ENCODE measurements at regions of chr6 and their contacts with region 1.

Region 1: GRCh38 chr6:5053038-5053437 is 32.1 kb upstream of the PPP1R3G start:
- DNase-seq: no peak
- H3K4me3 ChIP-seq: no peak overlapping the region
- H3K27ac ChIP-seq: no peak overlapping the region
- H3K4me1 ChIP-seq: no peaks in the 10 kb centered on the region
- H3K27me3 ChIP-seq: no peaks in the 10 kb centered on the region
- CTCF ChIP-seq: no peak

Region 2: DNA sequence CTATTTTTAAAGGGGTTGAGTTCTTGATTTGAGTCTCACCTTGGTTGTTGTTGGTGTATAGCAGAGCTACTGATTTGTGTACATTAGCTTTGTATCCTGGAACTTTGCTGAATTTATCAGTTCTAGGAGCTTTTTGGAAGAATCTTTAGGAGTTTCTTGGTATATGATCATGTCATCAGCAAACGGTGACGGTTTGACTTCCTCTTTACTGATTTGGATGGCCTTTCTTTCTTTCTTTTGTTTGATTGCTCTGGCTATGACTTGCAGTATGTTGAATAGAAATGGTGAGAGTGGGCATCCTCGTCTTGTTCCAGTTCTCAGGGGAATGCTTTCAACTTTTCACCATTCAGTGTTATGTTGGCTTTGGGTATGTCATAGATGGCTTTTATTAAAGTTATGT is 212.9 kb before region 1 on chr6:
- CTCF ChIA-PET with region 1: no interaction called
- dilution Hi-C with region 1: no loop called
- in situ Hi-C with region 1: no loop called
- intact Hi-C with region 1: no loop called
- DNase-seq: no peak
- H3K4me3 ChIP-seq: no peak overlapping the region
- H3K27ac ChIP-seq: no peak overlapping the region
- H3K4me1 ChIP-seq: no peaks in the 10 kb centered on the region
- H3K27me3 ChIP-seq: no peaks in the 10 kb centered on the region
- CTCF ChIP-seq: no peak

Region 3: GRCh38 chr6:5003604-5004372 is 49.2 kb before region 1 on chr6 and contains the start of gene RPP40:
- CTCF ChIA-PET with region 1: no interaction called
- dilution Hi-C with region 1: no loop called
- in situ Hi-C with region 1: no loop called
- intact Hi-C with region 1: no loop called
- DNase-seq: peak; percentile 96
- H3K4me3 ChIP-seq: peak within 1 kb of the TSS; percentile 69 to 98 (median 93)
- H3K27ac ChIP-seq: peak within 1 kb of the TSS; percentile 52
- H3K4me1 ChIP-seq: peaks cover 8% of the 10 kb centered on the region
- H3K27me3 ChIP-seq: no peaks in the 10 kb centered on the region
- CTCF ChIP-seq: peak; percentile 58 to 92
- total RNA-seq, gene RPP40: 11.5 to 15.0 TPM

Region 4: GRCh38 chr6:5278047-5278446 is 225.0 kb after region 1 on chr6:
- CTCF ChIA-PET with region 1: no interaction called
- dilution Hi-C with region 1: no loop called
- in situ Hi-C with region 1: no loop called
- intact Hi-C with region 1: loop called (anchors 10 kb)
- DNase-seq: no peak
- H3K4me3 ChIP-seq: no peak overlapping the region
- H3K27ac ChIP-seq: no peak overlapping the region
- H3K4me1 ChIP-seq: peaks cover 16% of the 10 kb centered on the region
- H3K27me3 ChIP-seq: no peaks in the 10 kb centered on the region
- CTCF ChIP-seq: no peak

Region 5: GRCh38 chr6:5398530-5398929 is 345.5 kb after region 1 on chr6:
- CTCF ChIA-PET with region 1: interaction called, 3 read pairs
- dilution Hi-C with region 1: no loop called
- in situ Hi-C with region 1: no loop called
- intact Hi-C with region 1: loop called (anchors 2 kb)
- DNase-seq: peak; percentile 56
- H3K4me3 ChIP-seq: no peak overlapping the region
- H3K27ac ChIP-seq: no peak overlapping the region
- H3K4me1 ChIP-seq: peaks cover 11% of the 10 kb centered on the region
- H3K27me3 ChIP-seq: no peaks in the 10 kb centered on the region
- CTCF ChIP-seq: peak; percentile 60 to 65